ENCODE measurements at regions of chr5 and their contacts with region 1.

Region 1: DNA sequence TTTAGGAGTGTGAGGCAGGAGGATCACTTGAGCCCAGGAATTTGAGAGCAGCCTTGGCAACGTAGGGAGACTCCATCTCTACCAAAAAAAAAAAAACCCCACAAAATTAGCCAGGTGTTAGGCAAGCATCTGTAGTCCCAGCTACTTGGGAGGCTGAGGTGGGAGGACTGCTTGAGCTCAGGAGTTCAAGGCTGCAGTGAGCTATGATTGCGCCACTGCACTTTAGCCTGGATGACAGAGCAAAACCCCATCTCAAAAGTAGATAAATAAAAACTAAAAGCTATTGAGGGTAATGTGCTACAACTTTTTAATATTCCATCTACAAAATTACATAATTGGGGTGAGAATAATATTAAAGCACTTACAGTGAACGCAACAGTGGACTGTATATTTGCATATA is 5.9 kb downstream of the BDP1 start:
- DNase-seq: no peak
- ATAC-seq: no peak
- H3K4me3 ChIP-seq: no peak overlapping the region
- H3K4me3 Mint-ChIP-seq: no peak overlapping the region
- H3K27ac ChIP-seq: no peak overlapping the region
- H3K27ac Mint-ChIP-seq: no peak overlapping the region
- H3K4me1 ChIP-seq: peaks cover 10 to 11% of the 10 kb centered on the region in 2 donors
- H3K4me1 Mint-ChIP-seq: peaks cover 15% of the 10 kb centered on the region
- H3K27me3 ChIP-seq: no peaks in the 10 kb centered on the region
- H3K27me3 Mint-ChIP-seq: no peaks in the 10 kb centered on the region
- CTCF ChIP-seq: no peak

Region 2: GRCh38 chr5:71522151-71522550 is 60.8 kb after region 1 on chr5:
- CTCF ChIA-PET with region 1: no interaction called
- POLR2A ChIA-PET with region 1: no interaction called
- intact Hi-C with region 1: loop called (anchors 10 kb)
- DNase-seq: no peak
- ATAC-seq: no peak
- H3K4me3 ChIP-seq: no peak overlapping the region
- H3K4me3 Mint-ChIP-seq: no peak overlapping the region
- H3K27ac ChIP-seq: no peak overlapping the region
- H3K27ac Mint-ChIP-seq: no peak overlapping the region
- H3K4me1 ChIP-seq: no peaks in the 10 kb centered on the region
- H3K4me1 Mint-ChIP-seq: no peaks in the 10 kb centered on the region
- H3K27me3 ChIP-seq: no peaks in the 10 kb centered on the region
- H3K27me3 Mint-ChIP-seq: no peaks in the 10 kb centered on the region
- CTCF ChIP-seq: no peak

Region 3: DNA sequence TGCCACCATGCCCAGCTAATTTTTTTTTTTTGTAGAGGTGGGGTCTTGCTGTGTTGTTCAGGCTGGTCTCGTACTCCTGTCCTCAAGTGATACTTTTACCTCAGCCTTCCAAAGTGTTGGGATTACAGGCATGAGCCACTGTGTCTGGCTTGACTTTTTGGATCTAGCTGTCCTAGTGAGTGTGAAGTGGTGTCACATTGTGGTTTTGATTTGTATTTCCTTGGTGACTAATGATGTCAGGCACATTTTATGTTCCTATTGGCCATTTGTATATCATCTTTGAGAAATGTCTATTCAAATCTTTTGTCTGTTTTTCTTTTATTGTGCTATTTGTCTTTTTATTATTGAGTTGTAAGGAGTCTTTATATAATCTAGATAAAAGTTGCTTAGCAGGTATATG is 72.3 kb after region 1 on chr5:
- CTCF ChIA-PET with region 1: no interaction called
- POLR2A ChIA-PET with region 1: no interaction called
- intact Hi-C with region 1: no loop called
- DNase-seq: peak; percentile 60
- ATAC-seq: peak; percentile 43
- H3K4me3 ChIP-seq: no peak overlapping the region
- H3K4me3 Mint-ChIP-seq: no peak overlapping the region
- H3K27ac ChIP-seq: no peak overlapping the region
- H3K27ac Mint-ChIP-seq: peak overlapping the region; percentile 17
- H3K4me1 ChIP-seq: no peaks in the 10 kb centered on the region
- H3K4me1 Mint-ChIP-seq: peaks cover 10% of the 10 kb centered on the region
- H3K27me3 ChIP-seq: no peaks in the 10 kb centered on the region
- H3K27me3 Mint-ChIP-seq: no peaks in the 10 kb centered on the region
- CTCF ChIP-seq: no peak